PC-3 (cell line): ENCODE measurements at regions of chr14 and their contacts with region 1.

Region 1: DNA sequence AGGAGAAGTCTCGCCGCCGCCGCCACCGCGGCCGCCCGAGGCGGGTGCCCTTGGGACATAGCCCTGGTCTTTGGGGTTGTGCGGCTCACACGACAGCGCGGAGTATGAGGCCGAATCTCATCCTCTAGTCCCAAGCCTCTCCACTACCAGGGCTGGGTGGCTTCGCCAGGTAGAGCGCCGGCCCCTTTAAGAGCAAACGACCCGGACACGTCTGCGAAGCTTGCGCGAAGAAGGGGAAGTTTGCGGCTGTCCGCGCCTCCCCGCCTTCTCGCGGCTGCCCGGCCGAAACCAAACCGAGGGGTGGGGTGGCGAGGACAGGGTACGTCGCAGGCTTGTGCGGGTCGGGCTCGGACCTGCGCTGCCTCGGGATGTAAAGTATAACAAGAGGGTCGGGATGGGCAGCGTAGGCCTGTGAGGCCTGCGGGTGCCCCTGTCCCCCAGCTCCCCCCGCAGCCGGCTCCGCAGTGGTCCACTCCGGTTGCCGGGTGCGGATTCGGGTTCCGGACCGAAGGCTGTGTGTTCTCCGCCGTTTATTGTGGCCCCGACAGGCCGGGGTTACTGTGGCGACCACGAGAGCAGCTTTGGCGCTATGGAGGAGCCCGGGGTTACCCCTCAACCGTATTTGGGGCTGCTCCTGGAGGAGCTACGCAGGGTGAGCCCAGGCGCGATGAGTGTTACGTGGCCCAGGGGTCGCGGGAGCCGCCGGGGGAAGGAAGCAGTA is 33.3 kb downstream of the MIA2 start:
- DNase-seq: peak; percentile 84
- ATAC-seq: peak; percentile 87
- H3K4me3 ChIP-seq: peak overlapping the region; percentile 95
- H3K27ac ChIP-seq: peak overlapping the region; percentile 83
- H3K4me1 ChIP-seq: peaks cover 27% of the 10 kb centered on the region
- H3K27me3 ChIP-seq: no peaks in the 10 kb centered on the region
- CTCF ChIP-seq: no peak

Region 2: DNA sequence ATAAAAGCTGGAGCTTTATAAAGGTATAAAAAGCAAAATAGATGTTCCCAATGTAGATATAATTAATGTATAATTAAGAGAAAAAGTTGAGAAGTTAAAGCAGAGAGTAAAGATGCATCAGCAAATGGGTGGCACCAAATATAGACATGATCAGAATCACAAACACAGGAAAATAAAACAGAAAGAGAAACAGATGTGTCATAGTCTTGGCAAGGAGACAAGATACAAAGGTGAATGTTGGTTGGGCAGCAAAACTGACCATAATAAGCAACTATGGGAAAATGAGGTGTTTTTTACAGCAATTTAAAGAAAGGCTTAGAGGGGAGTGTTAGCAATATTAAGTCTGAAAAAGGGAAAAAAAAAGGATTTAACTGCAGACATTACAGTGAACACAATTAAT is 875.7 kb before region 1 on chr14:
- CTCF ChIA-PET with region 1: no interaction called
- POLR2A ChIA-PET with region 1: no interaction called
- intact Hi-C with region 1: no loop called
- DNase-seq: peak; percentile 49
- ATAC-seq: no peak
- H3K4me3 ChIP-seq: no peak overlapping the region
- H3K27ac ChIP-seq: no peak overlapping the region
- H3K4me1 ChIP-seq: peaks cover 9% of the 10 kb centered on the region; the same call in 1 of the 2 replicates
- H3K27me3 ChIP-seq: no peaks in the 10 kb centered on the region
- CTCF ChIP-seq: no peak

Region 3: GRCh38 chr14:39169541-39169900 is 97.5 kb before region 1 on chr14:
- CTCF ChIA-PET with region 1: no interaction called
- POLR2A ChIA-PET with region 1: interaction called, 15 read pairs
- intact Hi-C with region 1: loop called (anchors 1 kb)
- DNase-seq: no peak
- ATAC-seq: peak; percentile 47
- H3K4me3 ChIP-seq: peak overlapping the region; percentile 84
- H3K27ac ChIP-seq: peak overlapping the region; percentile 82
- H3K4me1 ChIP-seq: peaks cover 20% of the 10 kb centered on the region
- H3K27me3 ChIP-seq: no peaks in the 10 kb centered on the region
- CTCF ChIP-seq: no peak

Region 4: DNA sequence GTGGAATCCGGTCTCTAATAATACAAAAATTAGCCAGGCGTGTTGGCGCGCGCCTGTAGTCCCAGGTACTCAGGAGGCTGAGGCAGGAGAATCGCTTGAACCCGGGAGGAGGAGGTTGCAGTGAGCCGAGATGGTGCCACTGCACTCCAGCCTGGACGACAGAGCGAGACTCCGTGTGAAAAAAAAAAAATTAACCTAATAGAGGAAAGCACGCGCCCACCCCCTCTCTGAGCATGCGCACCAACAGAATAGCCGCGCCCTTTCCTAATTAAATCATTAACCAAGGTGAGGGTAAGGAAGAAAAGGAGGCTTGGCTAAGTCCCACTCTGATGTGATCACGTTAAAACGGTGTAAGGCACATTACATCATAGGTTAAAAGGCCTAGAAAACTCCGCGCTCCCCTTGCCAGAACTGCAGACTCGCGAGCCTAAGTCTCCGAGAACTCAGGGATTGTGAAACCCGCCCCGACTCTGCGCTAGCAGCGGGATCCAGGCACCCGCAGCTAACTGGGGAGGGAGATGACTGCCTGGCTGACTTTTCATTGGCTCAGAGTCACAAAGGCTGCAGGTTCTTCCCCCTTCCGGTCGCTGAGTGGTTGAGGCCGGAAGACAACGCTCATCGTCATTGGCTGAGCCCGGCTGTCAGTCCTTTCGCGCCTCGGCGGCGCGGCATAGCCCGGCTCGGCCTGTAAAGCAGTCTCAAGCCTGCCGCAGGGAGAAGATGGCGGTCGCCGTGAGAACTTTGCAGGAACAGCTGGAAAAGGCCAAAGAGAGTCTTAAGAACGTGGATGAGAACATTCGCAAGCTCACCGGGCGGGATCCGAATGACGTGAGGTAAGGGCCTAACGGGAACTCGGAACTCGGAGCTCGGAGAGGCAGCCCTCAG is 92.2 kb before region 1 on chr14 and contains the start of gene PNN:
- CTCF ChIA-PET with region 1: no interaction called
- POLR2A ChIA-PET with region 1: interaction called, 15 read pairs
- intact Hi-C with region 1: loop called (anchors 1 kb)
- DNase-seq: peak; percentile 99
- ATAC-seq: peak; percentile 89
- H3K4me3 ChIP-seq: peak within 1 kb of the TSS; percentile 96
- H3K27ac ChIP-seq: peak within 1 kb of the TSS; percentile 51
- H3K4me1 ChIP-seq: peaks cover 17% of the 10 kb centered on the region
- H3K27me3 ChIP-seq: no peaks in the 10 kb centered on the region
- CTCF ChIP-seq: no peak
- total RNA-seq, gene PNN: 36.7 and 45.6 TPM in 2 replicates

Region 5: DNA sequence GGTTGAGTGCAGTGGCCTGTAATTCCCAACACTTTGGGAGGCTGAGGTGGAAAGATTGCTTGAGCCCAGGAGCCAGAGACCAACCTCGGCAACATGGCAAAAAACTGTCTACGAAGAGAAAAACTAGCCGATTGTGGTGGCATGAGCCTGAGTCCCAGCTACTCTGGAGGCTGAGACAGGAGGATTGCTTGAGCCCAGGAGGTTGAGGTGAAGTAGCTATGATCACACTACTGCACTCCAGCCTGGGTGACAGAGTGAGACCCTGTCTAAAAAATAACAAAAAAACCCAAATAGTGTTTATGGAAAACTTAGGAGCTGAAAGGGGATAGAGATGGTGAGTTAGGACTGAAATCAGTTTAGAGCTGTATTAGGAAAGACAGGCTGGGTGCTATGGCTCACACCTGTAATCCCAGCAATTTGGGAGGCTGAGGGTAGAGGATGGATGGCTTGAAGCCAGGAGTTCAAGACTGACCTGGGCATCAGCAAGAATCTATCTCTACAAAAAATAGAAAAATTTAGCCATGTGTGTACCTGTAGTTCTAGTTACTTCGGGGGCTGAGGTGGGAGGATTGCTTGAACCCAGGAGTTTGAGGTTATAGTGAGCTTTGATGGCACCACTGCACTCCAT is 82.3 kb before region 1 on chr14:
- CTCF ChIA-PET with region 1: no interaction called
- POLR2A ChIA-PET with region 1: interaction called, 17 read pairs
- intact Hi-C with region 1: no loop called
- DNase-seq: no peak
- ATAC-seq: no peak
- H3K4me3 ChIP-seq: no peak overlapping the region
- H3K27ac ChIP-seq: no peak overlapping the region
- H3K4me1 ChIP-seq: peaks cover 12% of the 10 kb centered on the region
- H3K27me3 ChIP-seq: no peaks in the 10 kb centered on the region
- CTCF ChIP-seq: no peak

Region 6: GRCh38 chr14:39203659-39204606 is 63.1 kb before region 1 on chr14:
- CTCF ChIA-PET with region 1: no interaction called
- POLR2A ChIA-PET with region 1: interaction called, 11 read pairs
- intact Hi-C with region 1: no loop called
- DNase-seq: peak; percentile 89
- ATAC-seq: peak; percentile 82
- H3K4me3 ChIP-seq: peak overlapping the region; percentile 14; the same call in 1 of the 2 replicates
- H3K27ac ChIP-seq: peak overlapping the region; percentile 93
- H3K4me1 ChIP-seq: peaks cover 19% of the 10 kb centered on the region
- H3K27me3 ChIP-seq: no peaks in the 10 kb centered on the region
- CTCF ChIP-seq: no peak

Region 7: GRCh38 chr14:39219075-39219499 is 47.9 kb before region 1 on chr14:
- CTCF ChIA-PET with region 1: no interaction called
- POLR2A ChIA-PET with region 1: no interaction called
- intact Hi-C with region 1: loop called (anchors 1 kb)
- DNase-seq: peak; percentile 92
- ATAC-seq: peak; percentile 48
- H3K4me3 ChIP-seq: no peak overlapping the region
- H3K27ac ChIP-seq: peak overlapping the region; percentile 91
- H3K4me1 ChIP-seq: peaks cover 41% of the 10 kb centered on the region
- H3K27me3 ChIP-seq: no peaks in the 10 kb centered on the region
- CTCF ChIP-seq: no peak

Region 8: DNA sequence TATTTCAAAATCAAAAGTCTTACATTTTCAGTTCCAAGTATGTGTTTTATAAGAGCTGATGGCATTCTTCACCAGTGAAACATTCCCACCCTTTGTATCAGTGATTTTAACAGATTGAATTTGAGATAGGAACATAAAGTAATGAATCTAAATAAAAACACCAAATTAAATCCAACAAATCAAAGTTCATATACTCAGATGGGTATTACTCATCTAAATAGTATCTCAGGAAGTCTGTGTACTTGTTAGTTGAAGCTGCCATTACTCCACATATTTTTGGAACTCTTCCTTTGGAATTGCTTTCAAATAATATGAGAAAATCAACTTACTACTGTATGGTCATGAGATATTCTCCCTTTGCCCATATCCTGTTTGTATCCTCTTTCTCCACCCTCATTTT is 55.8 kb after region 1 on chr14:
- CTCF ChIA-PET with region 1: no interaction called
- POLR2A ChIA-PET with region 1: no interaction called
- intact Hi-C with region 1: no loop called
- DNase-seq: no peak
- ATAC-seq: no peak
- H3K4me3 ChIP-seq: no peak overlapping the region
- H3K27ac ChIP-seq: no peak overlapping the region
- H3K4me1 ChIP-seq: 0 out of 2 replicates have a peak, but pooled peaks cover 5% of the 10 kb centered on the region
- H3K27me3 ChIP-seq: no peaks in the 10 kb centered on the region
- CTCF ChIP-seq: no peak

Region 9: GRCh38 chr14:39432179-39432618 is 165.2 kb after region 1 on chr14 and contains the start of gene FBXO33:
- CTCF ChIA-PET with region 1: no interaction called
- POLR2A ChIA-PET with region 1: no interaction called
- intact Hi-C with region 1: loop called (anchors 1 kb)
- DNase-seq: peak; percentile 92
- ATAC-seq: peak; percentile 80
- H3K4me3 ChIP-seq: peak within 1 kb of the TSS; percentile 95
- H3K27ac ChIP-seq: peak within 1 kb of the TSS; percentile 96
- H3K4me1 ChIP-seq: peaks cover 25% of the 10 kb centered on the region
- H3K27me3 ChIP-seq: no peaks in the 10 kb centered on the region
- CTCF ChIP-seq: no peak
- total RNA-seq, gene FBXO33: 21.9 and 26.9 TPM in 2 replicates

Region 10: GRCh38 chr14:39446131-39446744 is 179.2 kb after region 1 on chr14:
- CTCF ChIA-PET with region 1: no interaction called
- POLR2A ChIA-PET with region 1: no interaction called
- intact Hi-C with region 1: no loop called
- DNase-seq: no peak
- ATAC-seq: no peak
- H3K4me3 ChIP-seq: no peak overlapping the region
- H3K27ac ChIP-seq: no peak overlapping the region
- H3K4me1 ChIP-seq: no peaks in the 10 kb centered on the region
- H3K27me3 ChIP-seq: no peaks in the 10 kb centered on the region
- CTCF ChIP-seq: no peak